HEK293 (cell line): ENCODE measurements at regions of chr1 and their contacts with region 1.

Region 1: DNA sequence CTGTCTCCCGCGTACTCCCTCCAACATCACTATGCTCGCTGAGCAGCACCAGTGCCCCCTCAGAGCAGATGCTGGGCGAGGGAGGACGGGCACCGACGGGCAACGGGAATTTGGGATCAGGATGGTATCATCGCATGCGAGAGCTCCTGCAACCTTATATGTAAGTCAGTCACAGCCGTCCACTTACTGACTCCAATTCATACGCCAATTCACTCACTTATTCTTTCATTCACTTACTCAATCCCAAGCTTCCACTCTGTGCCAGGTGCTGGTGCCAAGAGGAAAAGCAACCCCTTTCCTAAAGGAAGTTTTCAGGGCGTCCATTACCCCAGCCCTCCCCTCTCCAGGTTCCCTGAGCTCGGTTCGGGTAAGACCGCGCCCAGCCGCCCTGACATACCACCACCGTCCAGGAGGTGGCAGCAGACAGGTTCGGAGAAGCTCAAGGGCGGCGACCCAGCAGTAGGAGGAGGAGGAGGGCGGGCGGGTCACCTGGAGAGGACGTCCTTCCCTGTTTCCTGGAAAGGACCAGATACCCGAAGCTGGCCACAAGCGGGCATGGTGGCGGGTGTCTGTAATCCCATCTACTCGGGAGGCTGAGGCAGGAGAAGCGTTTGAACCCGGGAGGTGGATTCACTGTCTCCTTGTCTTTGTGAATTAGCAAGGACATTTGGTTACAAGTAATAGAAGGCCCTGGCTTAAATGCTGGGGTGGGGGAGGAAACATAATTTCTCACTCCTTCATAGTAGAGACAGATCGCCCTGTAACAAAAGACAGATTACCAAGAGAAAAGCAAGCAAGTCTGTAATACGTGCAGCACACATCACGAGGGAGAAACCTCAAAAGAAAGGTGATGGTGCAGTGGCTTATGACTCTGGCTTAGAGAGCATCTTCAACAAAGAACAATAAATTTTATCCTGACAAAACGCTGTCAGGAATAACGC is 7.6 kb upstream of the IL22RA1 start:
- H3K4me3 ChIP-seq: no peak overlapping the region
- H3K27ac ChIP-seq: no peak overlapping the region
- H3K4me1 ChIP-seq: no peaks in the 10 kb centered on the region
- CTCF ChIP-seq: peak; percentile 92

Region 2: DNA sequence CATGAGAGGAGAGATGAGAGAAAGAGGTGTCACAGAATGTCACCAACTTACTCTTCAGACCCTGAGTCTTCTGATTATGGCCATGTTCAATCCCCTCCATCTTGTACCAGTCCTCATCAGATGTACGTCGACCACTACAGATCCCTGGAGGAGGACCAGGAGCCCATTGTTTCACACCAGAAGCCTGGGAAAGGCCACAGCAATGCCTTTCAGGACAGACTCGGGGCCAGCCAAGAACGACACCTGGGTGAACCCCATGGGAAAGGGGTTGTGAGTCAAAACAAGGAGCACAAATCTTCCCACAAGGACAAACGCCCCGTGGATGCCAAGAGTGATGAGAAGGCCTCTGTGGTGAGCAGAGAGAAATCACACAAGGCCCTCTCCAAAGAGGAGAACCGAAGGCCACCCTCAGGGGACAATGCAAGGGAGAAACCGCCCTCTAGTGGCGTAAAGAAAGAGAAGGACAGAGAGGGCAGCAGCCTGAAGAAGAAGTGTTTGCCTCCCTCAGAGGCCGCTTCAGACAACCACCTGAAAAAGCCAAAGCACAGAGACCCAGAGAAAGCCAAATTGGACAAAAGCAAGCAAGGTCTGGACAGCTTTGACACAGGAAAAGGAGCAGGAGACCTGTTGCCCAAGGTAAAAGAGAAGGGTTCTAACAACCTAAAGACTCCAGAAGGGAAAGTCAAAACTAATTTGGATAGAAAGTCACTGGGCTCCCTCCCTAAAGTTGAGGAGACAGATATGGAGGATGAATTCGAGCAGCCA is 399.3 kb before region 1 on chr1:
- CTCF ChIA-PET with region 1: no interaction called
- POLR2A ChIA-PET with region 1: no interaction called
- H3K4me3 ChIP-seq: no peak overlapping the region
- H3K27ac ChIP-seq: peak overlapping the region; percentile 39; the same call in 1 of the 2 replicates
- H3K4me1 ChIP-seq: no peaks in the 10 kb centered on the region
- CTCF ChIP-seq: peak; percentile 61; the same call in 1 of the 2 replicates

Region 3: GRCh38 chr1:23951571-23952095 is 198.9 kb before region 1 on chr1:
- CTCF ChIA-PET with region 1: no interaction called
- POLR2A ChIA-PET with region 1: no interaction called
- H3K4me3 ChIP-seq: no peak overlapping the region
- H3K27ac ChIP-seq: no peak overlapping the region
- H3K4me1 ChIP-seq: no peaks in the 10 kb centered on the region
- CTCF ChIP-seq: no peak

Region 4: DNA sequence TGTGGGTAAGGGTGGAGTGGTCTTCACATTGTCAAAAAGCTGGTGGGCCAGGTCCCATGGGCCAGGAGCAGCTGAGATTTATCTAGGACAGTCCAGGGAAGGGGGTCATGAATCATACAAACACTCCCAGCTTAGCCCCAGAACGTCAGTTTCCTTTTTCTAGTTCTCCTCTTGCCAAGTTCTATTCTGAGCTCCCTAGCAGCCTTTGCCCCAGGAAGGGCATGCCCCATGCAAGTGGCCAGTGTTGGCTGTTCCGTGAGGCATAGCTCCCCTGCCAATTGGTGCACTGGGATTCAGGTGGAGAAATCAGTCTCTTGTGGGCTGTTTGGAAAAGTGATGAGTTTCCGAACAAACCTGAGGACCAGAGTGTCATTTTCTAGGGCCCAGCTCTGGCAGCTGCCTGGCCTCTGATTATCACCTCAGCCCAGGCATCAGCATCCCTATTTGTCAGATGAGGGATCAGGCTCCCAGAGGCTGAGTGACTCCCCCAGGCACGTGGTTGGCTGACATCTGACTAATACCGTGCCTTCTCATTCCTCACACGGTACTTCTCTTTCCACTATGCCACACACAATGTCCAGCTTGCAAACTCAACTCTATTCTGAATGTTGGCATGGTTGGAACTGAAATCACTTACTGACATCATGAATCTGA is 24.4 kb before region 1 on chr1:
- CTCF ChIA-PET with region 1: interaction called, 15 read pairs
- POLR2A ChIA-PET with region 1: interaction called, 4 read pairs
- H3K4me3 ChIP-seq: no peak overlapping the region
- H3K27ac ChIP-seq: no peak overlapping the region
- H3K4me1 ChIP-seq: no peaks in the 10 kb centered on the region
- CTCF ChIP-seq: no peak

Region 5: GRCh38 chr1:24137031-24137430 is 13.5 kb before region 1 on chr1:
- CTCF ChIA-PET with region 1: interaction called, 28 read pairs
- POLR2A ChIA-PET with region 1: interaction called, 3 read pairs
- H3K4me3 ChIP-seq: no peak overlapping the region
- H3K27ac ChIP-seq: no peak overlapping the region
- H3K4me1 ChIP-seq: no peaks in the 10 kb centered on the region
- CTCF ChIP-seq: no peak

Region 6: DNA sequence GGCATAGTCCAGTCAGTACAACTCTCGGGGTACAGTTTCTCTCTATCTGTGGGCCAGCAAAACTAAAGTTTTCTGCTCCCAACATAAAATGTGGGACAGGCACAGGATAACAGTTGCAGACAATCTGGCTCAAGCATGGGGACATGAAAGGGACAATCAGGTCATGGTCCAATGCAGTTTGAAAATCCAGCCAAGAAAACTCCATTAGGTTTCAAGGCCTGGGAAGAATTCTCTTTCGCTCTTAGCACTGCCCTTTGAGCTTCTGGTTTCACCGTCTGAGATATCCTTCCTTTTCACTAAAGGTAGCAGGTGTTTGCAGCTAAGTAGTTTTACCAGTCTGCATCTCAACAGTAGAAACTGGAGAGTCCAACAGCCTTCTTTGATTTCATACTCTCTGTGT is 13.5 kb after region 1 on chr1:
- CTCF ChIA-PET with region 1: interaction called, 12 read pairs
- POLR2A ChIA-PET with region 1: interaction called, 3 read pairs
- H3K4me3 ChIP-seq: no peak overlapping the region
- H3K27ac ChIP-seq: no peak overlapping the region
- H3K4me1 ChIP-seq: no peaks in the 10 kb centered on the region
- CTCF ChIP-seq: no peak

Region 7: GRCh38 chr1:24186993-24187805 is 36.7 kb after region 1 on chr1 and contains the start of gene IFNLR1:
- CTCF ChIA-PET with region 1: interaction called, 11 read pairs
- POLR2A ChIA-PET with region 1: no interaction called
- H3K4me3 ChIP-seq: peak within 1 kb of the TSS; percentile 69
- H3K27ac ChIP-seq: peak within 1 kb of the TSS; percentile 82
- H3K4me1 ChIP-seq: peaks cover 3% of the 10 kb centered on the region
- CTCF ChIP-seq: no peak

Region 8: GRCh38 chr1:24403806-24404205 is 253.3 kb after region 1 on chr1:
- CTCF ChIA-PET with region 1: interaction called, 10 read pairs
- POLR2A ChIA-PET with region 1: no interaction called
- H3K4me3 ChIP-seq: no peak overlapping the region
- H3K27ac ChIP-seq: no peak overlapping the region
- H3K4me1 ChIP-seq: no peaks in the 10 kb centered on the region; the same call in 1 of the 2 replicates
- CTCF ChIP-seq: no peak